B cell (primary cell): ENCODE measurements at regions of chr5 and their contacts with region 1.

Region 1: DNA sequence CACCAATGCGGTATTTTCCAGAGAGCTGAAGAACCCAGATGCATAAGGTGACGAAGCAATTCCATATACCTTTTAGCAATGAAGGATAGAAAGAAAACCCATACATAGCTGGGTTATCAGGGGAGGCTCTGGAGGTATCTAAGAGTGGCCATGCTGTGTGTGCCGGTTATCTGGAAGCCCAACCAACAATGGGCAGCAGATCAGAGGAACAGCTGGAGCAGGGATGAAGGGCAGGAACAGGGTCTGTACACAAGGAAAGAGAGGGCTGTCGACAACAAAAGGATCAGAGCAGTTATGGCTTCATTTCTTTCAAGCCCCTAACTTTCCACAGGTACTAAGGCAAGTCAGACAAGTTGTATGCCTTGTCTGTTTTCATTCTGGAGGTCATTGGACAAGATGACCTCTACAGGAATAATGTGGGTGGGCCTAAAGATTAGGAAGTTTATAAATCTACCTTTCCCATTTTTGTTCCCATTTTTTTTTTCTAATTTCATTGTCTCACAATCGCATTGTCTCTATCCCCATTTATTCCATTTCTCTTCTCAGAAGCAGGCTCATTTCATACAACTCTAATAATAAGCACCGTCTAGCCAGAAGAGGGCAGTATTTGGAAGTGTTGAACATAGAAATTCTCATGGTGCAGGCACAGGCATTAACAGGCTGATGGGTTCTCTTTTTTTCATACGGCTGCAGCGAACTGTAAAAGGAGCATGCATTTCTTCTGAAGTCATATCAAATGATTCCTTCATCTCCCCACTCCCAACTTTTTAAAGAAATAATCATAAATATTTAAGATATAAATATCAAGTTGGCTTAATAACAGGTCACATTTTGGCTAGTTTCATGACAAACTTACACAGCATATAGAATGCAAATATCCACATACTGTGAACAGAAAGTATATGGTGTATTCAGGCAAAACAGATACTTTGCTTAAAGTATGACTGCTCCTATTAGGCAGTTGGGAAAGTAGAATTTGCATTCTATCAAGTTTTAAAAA is 63.5 kb downstream of the ZNF474 start:
- DNase-seq: peak; percentile 26
- ATAC-seq: no peak
- H3K4me3 ChIP-seq: no peak overlapping the region
- H3K4me3 Mint-ChIP-seq: no peak overlapping the region
- H3K27ac ChIP-seq: no peak overlapping the region
- H3K27ac Mint-ChIP-seq: no peak overlapping the region
- H3K4me1 ChIP-seq: no peaks in the 10 kb centered on the region
- H3K4me1 Mint-ChIP-seq: no peaks in the 10 kb centered on the region
- H3K27me3 ChIP-seq: no peaks in the 10 kb centered on the region
- H3K27me3 Mint-ChIP-seq: peaks cover 23% of the 10 kb centered on the region
- CTCF ChIP-seq: peak; percentile 54

Region 2: DNA sequence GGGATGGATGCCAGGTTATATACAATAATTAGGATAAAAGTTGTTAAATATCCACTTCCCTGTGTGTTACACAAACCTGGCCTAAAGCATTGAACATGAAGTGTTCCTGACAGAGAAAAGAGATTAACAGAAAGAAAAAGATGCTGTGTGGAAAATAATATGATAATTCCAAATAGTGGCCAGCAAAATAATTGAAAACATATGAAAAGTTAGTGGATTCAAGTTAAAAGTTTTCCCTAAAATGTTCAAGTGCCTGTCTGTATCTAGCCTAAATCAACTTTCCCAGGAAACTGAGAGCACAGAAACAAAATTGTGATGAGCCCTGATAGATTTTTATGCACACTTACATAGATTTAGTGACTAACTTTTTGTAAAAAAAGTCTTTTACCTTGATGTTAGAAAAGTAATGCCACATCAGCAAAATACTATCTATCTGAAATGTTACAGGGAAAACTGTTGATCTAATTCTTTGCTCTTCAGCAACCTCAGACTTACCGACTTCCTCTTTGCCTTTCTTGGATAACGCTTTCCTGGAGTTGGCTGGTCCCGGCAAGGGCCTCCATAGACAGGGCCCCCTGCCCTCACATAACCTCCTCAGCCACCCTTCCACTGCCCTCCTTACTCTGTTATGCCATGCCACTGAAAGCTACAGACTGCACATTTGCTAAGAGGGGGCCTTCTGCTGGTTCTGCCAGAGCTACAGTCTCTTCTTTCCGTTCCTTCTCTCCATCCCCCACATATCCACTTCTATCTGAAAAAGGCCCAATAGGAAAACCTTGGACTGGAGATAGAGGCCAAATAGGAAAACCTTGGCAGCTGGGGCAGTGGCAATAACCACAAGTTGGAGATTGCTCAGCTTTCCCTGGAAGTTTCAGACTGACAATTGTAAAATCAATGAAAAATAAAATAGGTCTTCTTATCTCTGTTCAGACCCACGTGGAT is 19.1 kb before region 1 on chr5:
- CTCF ChIA-PET with region 1: no interaction called
- POLR2A ChIA-PET with region 1: no interaction called
- intact Hi-C with region 1: no loop called
- DNase-seq: no peak
- ATAC-seq: no peak
- H3K4me3 ChIP-seq: no peak overlapping the region
- H3K4me3 Mint-ChIP-seq: no peak overlapping the region
- H3K27ac ChIP-seq: no peak overlapping the region
- H3K27ac Mint-ChIP-seq: no peak overlapping the region
- H3K4me1 ChIP-seq: no peaks in the 10 kb centered on the region
- H3K4me1 Mint-ChIP-seq: no peaks in the 10 kb centered on the region
- H3K27me3 ChIP-seq: no peaks in the 10 kb centered on the region
- H3K27me3 Mint-ChIP-seq: peaks cover 3% of the 10 kb centered on the region
- CTCF ChIP-seq: no peak

Region 3: DNA sequence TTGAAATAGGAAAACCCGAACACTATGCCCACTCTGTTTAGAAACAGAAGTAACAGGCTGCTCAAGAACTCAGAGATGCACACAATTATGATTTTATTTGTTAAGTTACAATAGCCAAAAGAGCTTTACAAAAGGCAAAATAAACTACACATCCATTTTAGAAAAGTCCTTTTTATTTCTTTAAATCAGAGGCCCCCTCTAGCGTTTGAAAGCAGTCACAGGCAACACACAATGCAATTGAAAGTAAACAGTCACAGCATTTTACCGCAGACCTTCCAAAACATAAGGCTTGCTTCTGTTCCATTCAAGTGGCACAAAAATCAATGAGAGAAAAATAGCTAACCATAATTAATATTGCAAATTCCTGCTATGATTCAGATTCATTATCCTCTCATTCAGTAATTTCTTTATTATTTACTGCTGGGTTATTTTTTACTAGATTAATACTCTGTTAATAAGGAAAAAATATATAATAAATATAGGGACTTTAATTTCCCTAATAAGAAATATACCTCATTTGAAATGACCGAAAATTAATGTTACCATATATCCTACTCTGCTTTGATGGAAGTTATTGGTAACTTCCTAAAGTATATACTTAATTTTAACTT is 1152.1 kb after region 1 on chr5:
- CTCF ChIA-PET with region 1: no interaction called
- POLR2A ChIA-PET with region 1: no interaction called
- intact Hi-C with region 1: loop called (anchors 10 kb)
- DNase-seq: peak; percentile 17
- ATAC-seq: no peak
- H3K4me3 ChIP-seq: no peak overlapping the region
- H3K4me3 Mint-ChIP-seq: no peak overlapping the region
- H3K27ac ChIP-seq: no peak overlapping the region
- H3K27ac Mint-ChIP-seq: no peak overlapping the region
- H3K4me1 ChIP-seq: no peaks in the 10 kb centered on the region
- H3K4me1 Mint-ChIP-seq: peaks cover 12% of the 10 kb centered on the region
- H3K27me3 ChIP-seq: no peaks in the 10 kb centered on the region
- H3K27me3 Mint-ChIP-seq: no peaks in the 10 kb centered on the region
- CTCF ChIP-seq: peak; percentile 63